ENCODE measurements at regions of chr11 and their contacts with region 1.

Region 1: DNA sequence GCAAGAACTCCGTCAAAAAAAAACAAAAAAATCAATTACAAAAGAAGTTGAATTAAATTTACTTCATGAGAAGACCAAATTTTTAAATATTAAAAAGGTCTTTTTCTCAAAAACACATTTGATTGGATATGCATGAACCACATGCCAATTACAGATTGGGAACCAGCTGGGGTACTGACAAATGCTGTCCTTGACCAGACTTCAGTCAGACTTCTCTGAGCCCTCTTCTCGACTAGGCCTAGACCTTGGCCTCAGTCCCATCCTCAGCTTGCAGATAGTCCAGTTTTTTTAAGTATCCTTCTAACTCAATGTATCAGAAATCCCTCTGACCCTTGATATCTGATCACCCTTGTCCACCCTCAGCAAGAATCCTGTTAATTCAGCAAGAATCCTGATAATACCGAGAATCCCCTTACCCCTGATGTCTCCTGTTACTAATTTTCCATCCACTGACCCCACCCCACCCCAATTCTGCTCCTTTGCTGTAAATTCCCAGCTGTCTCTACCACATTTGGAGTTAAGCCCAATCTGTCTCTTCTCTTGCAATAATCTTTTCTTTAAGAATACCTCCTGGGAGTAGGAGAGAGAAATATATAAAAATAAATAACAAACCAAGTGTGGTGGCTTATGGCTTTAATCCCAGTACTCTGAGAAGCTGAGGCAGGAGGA is 30.9 kb downstream of the OR4D9 start:
- DNase-seq: no peak
- H3K4me3 ChIP-seq: no peak overlapping the region
- H3K27ac ChIP-seq: no peak overlapping the region
- H3K4me1 ChIP-seq: peaks cover 0 to 5% of the 10 kb centered on the region in 2 experiments; a peak in 1 of 4 replicates
- H3K27me3 ChIP-seq: no peaks in the 10 kb centered on the region
- CTCF ChIP-seq: no peak
- EP300 ChIP-seq: no peak
- RAD21 ChIP-seq: no peak

Region 2: GRCh38 chr11:58880625-58881024 is 661.7 kb before region 1 on chr11:
- CTCF ChIA-PET with region 1: no interaction called
- POLR2A ChIA-PET with region 1: no interaction called
- DNase-seq: no peak
- H3K4me3 ChIP-seq: no peak overlapping the region
- H3K27ac ChIP-seq: no peak overlapping the region
- H3K4me1 ChIP-seq: no peaks in the 10 kb centered on the region
- H3K27me3 ChIP-seq: no peaks in the 10 kb centered on the region
- CTCF ChIP-seq: no peak
- EP300 ChIP-seq: no peak
- RAD21 ChIP-seq: no peak

Region 3: GRCh38 chr11:59429924-59430516 is 112.3 kb before region 1 on chr11:
- CTCF ChIA-PET with region 1: no interaction called
- POLR2A ChIA-PET with region 1: no interaction called
- DNase-seq: peak; percentile 34
- H3K4me3 ChIP-seq: no peak overlapping the region; a peak in 1 of 4 replicates
- H3K27ac ChIP-seq: no peak overlapping the region
- H3K4me1 ChIP-seq: no peaks in the 10 kb centered on the region
- H3K27me3 ChIP-seq: peaks cover 4% of the 10 kb centered on the region; the same call in 1 of the 2 replicates
- CTCF ChIP-seq: peak; percentile 71
- EP300 ChIP-seq: no peak
- RAD21 ChIP-seq: peak; percentile 62

Region 4: GRCh38 chr11:59528713-59529112 is 13.6 kb before region 1 on chr11:
- CTCF ChIA-PET with region 1: interaction called, 16 read pairs
- POLR2A ChIA-PET with region 1: no interaction called
- DNase-seq: no peak
- H3K4me3 ChIP-seq: no peak overlapping the region
- H3K27ac ChIP-seq: no peak overlapping the region
- H3K4me1 ChIP-seq: no peaks in the 10 kb centered on the region
- H3K27me3 ChIP-seq: peaks cover 12% of the 10 kb centered on the region; the same call in 1 of the 2 replicates
- CTCF ChIP-seq: no peak
- EP300 ChIP-seq: no peak
- RAD21 ChIP-seq: no peak

Region 5: DNA sequence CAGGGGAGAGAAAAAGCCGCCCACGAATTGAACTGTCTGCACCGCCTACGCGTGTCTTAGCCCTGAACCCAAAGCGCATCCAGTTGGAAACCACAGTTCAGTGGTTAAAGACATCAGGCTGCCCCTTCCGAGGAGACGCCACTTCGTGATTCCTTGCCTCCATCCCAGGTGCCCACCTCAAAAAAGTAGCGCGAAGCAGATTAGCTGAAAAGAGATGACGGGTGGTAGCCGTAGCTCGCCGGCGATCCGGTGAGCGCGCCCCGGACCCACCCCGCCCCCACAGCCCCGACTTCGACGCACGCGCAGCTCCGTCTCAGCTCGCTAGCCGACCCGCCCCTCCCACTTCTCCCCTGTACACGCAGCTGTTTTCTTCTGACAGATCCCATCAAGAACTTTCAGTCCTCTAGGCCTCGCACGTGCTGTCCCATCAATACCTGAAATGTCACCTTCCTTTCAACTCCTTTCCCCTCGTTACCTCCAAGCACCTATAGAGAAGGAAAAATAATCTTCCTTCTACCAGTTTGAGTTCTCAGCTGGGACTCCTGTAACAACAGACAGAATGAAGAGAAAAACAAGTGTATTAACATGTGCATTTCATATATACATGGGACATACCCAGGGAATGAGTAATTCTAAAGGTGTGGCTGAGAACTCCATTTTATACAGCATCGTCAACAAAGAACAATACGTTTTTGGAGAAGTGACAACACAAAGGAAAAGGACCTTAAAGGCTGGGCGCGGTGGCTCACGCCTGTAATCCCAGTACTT is 18.6 kb after region 1 on chr11:
- CTCF ChIA-PET with region 1: interaction called, 11 read pairs
- POLR2A ChIA-PET with region 1: no interaction called
- DNase-seq: peak; percentile 91
- H3K4me3 ChIP-seq: peak overlapping the region; percentile 79 to 86
- H3K27ac ChIP-seq: peak overlapping the region; percentile 79 to 82
- H3K4me1 ChIP-seq: peaks cover 0 to 5% of the 10 kb centered on the region in 2 experiments; a peak in 2 of 4 replicates
- H3K27me3 ChIP-seq: no peaks in the 10 kb centered on the region
- CTCF ChIP-seq: no peak
- EP300 ChIP-seq: no peak
- RAD21 ChIP-seq: no peak

Region 6: GRCh38 chr11:59680287-59681154 is 138.2 kb after region 1 on chr11:
- CTCF ChIA-PET with region 1: interaction called, 15 read pairs
- POLR2A ChIA-PET with region 1: no interaction called
- DNase-seq: peak; percentile 63
- H3K4me3 ChIP-seq: no peak overlapping the region; a peak in 1 of 4 replicates
- H3K27ac ChIP-seq: no peak overlapping the region
- H3K4me1 ChIP-seq: 0 out of 4 replicates have a peak, but pooled peaks cover 0 to 4% of the 10 kb centered on the region in 2 experiments
- H3K27me3 ChIP-seq: no peaks in the 10 kb centered on the region
- CTCF ChIP-seq: peak; percentile 80
- EP300 ChIP-seq: no peak
- RAD21 ChIP-seq: peak; percentile 89

Measured in SK-N-SH (cell line).